ENCODE measurements at regions of chr10 and their contacts with region 1.

Region 1: GRCh38 chr10:5873515-5873995 is 16.1 kb downstream of the ANKRD16 start:
- DNase-seq: peak; percentile 94
- H3K4me3 ChIP-seq: no peak overlapping the region
- H3K27ac ChIP-seq: no peak overlapping the region
- H3K4me1 ChIP-seq: peaks cover 0 to 3% (median 0%) of the 10 kb centered on the region in 4 donors
- H3K27me3 ChIP-seq: no peaks in the 10 kb centered on the region
- CTCF ChIP-seq: peak; percentile 76 to 79 (median 79)
- EP300 ChIP-seq: no peak
- POLR2A ChIP-seq: no peak

Region 2: GRCh38 chr10:5629303-5630111 is 244.0 kb before region 1 on chr10:
- intact Hi-C with region 1: loop called (anchors 10 kb)
- DNase-seq: no peak
- H3K4me3 ChIP-seq: peak overlapping the region in 2 of 4 donors; percentile 35 to 43
- H3K27ac ChIP-seq: peak overlapping the region; percentile 59 to 78 (median 76)
- H3K4me1 ChIP-seq: peaks cover 24 to 51% (median 48%) of the 10 kb centered on the region in 4 donors
- H3K27me3 ChIP-seq: no peaks in the 10 kb centered on the region
- CTCF ChIP-seq: peak; percentile 55 to 83 (median 62)
- EP300 ChIP-seq: no peak
- POLR2A ChIP-seq: no peak

Region 3: GRCh38 chr10:5684318-5684970 is 189.1 kb before region 1 on chr10 and contains the start of gene TASOR2:
- intact Hi-C with region 1: loop called (anchors 10 kb)
- DNase-seq: peak; percentile 98
- H3K4me3 ChIP-seq: peak within 1 kb of the TSS; percentile 88 to 97 (median 94)
- H3K27ac ChIP-seq: peak within 1 kb of the TSS; percentile 86 to 92 (median 90)
- H3K4me1 ChIP-seq: peaks cover 8 to 34% (median 27%) of the 10 kb centered on the region in 4 donors
- H3K27me3 ChIP-seq: no peaks in the 10 kb centered on the region
- CTCF ChIP-seq: no peak
- EP300 ChIP-seq: no peak
- POLR2A ChIP-seq: no peak
- total RNA-seq, gene TASOR2: 56.9 to 66.3 (median 63.9) TPM

Region 4: GRCh38 chr10:5977471-5978229 is 104.1 kb after region 1 on chr10 and contains the start of gene IL15RA:
- intact Hi-C with region 1: no loop called
- DNase-seq: peak; percentile 92
- H3K4me3 ChIP-seq: peak within 1 kb of the TSS; percentile 79 to 89 (median 87)
- H3K27ac ChIP-seq: peak within 1 kb of the TSS; percentile 88 to 91 (median 89)
- H3K4me1 ChIP-seq: peaks cover 8 to 35% (median 21%) of the 10 kb centered on the region in 4 donors
- H3K27me3 ChIP-seq: no peaks in the 10 kb centered on the region
- CTCF ChIP-seq: peak in 2 of 3 experiments; percentile 9 to 30
- EP300 ChIP-seq: no peak
- POLR2A ChIP-seq: no peak
- total RNA-seq, gene IL15RA: 19.5 to 30.1 (median 24.2) TPM